Psoas muscle (tissue), 8 donors: ENCODE measurements at regions of chr1 and their contacts with region 1.

Region 1: DNA sequence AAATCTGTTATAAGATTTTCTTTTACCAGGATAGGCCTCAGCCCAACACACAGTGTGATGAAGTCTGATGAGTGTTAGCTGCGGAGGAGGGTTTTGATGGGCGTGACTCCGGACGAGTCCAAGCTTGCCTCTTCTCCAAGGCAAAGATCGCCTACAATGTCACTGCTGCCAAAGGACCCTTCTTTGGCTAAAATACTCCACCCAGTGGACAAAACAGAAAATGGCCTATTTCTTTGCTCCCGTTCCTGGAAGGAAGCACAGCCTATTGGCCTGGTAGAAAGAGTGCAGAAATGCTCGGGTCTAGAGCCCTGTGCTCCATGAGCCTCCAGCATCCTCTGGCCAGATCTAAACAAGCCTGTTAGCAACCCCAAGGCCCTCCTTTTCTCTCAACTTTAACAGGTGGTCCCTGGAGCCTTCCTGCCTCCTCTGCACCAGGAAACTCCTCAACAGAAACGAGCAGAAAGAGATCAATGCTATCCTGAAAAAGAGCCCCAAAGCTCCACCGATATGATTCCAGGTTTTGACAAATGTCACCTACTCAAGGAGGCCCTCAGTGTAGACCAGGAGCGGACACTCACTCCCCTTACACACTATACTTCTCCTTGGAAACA is 3.4 kb upstream of the CASQ2 start:
- DNase-seq: peak; percentile 65 to 68
- ATAC-seq: peak; percentile 66 to 78 (median 76)
- H3K4me3 ChIP-seq: peak overlapping the region; percentile 15
- H3K27ac ChIP-seq: peak overlapping the region; percentile 60
- H3K4me1 ChIP-seq: peaks cover 24% of the 10 kb centered on the region
- H3K27me3 ChIP-seq: no peaks in the 10 kb centered on the region
- CTCF ChIP-seq: peak; percentile 87

Region 2: GRCh38 chr1:115609021-115609420 is 162.9 kb before region 1 on chr1:
- intact Hi-C with region 1: loop called (anchors 5 kb)
- DNase-seq: no peak
- ATAC-seq: no peak
- H3K4me3 ChIP-seq: no peak overlapping the region
- H3K27ac ChIP-seq: no peak overlapping the region
- H3K4me1 ChIP-seq: no peaks in the 10 kb centered on the region
- H3K27me3 ChIP-seq: no peaks in the 10 kb centered on the region
- CTCF ChIP-seq: no peak

Region 3: GRCh38 chr1:115717541-115717940 is 54.4 kb before region 1 on chr1:
- intact Hi-C with region 1: loop called (anchors 1 to 2 kb)
- DNase-seq: peak; percentile 30 to 69
- ATAC-seq: peak; percentile 50 to 89 (median 70)
- H3K4me3 ChIP-seq: no peak overlapping the region
- H3K27ac ChIP-seq: no peak overlapping the region
- H3K4me1 ChIP-seq: no peaks in the 10 kb centered on the region
- H3K27me3 ChIP-seq: no peaks in the 10 kb centered on the region
- CTCF ChIP-seq: peak; percentile 69

Region 4: GRCh38 chr1:115753830-115754229 is 18.1 kb before region 1 on chr1:
- intact Hi-C with region 1: loop called in 1 of 2 experiments (anchors 1 kb)
- DNase-seq: peak; percentile 33 to 74
- ATAC-seq: peak; percentile 85 to 94 (median 88)
- H3K4me3 ChIP-seq: peak overlapping the region; percentile 16
- H3K27ac ChIP-seq: peak overlapping the region; percentile 90
- H3K4me1 ChIP-seq: peaks cover 65% of the 10 kb centered on the region
- H3K27me3 ChIP-seq: no peaks in the 10 kb centered on the region
- CTCF ChIP-seq: no peak

Region 5: GRCh38 chr1:115811140-115811828 is 39.3 kb after region 1 on chr1:
- intact Hi-C with region 1: no loop called
- DNase-seq: no peak
- ATAC-seq: no peak
- H3K4me3 ChIP-seq: no peak overlapping the region
- H3K27ac ChIP-seq: no peak overlapping the region
- H3K4me1 ChIP-seq: no peaks in the 10 kb centered on the region
- H3K27me3 ChIP-seq: no peaks in the 10 kb centered on the region
- CTCF ChIP-seq: no peak